ENCODE measurements at regions of chr6 and their contacts with region 1.

Region 1: GRCh38 chr6:24861934-24862333 is 63.2 kb upstream of the ARMH2 start:
- DNase-seq: no peak
- ATAC-seq: no peak
- H3K4me3 ChIP-seq: no peak overlapping the region
- H3K27ac ChIP-seq: no peak overlapping the region
- H3K4me1 ChIP-seq: peaks cover 8 to 10% of the 10 kb centered on the region in 2 donors
- H3K27me3 ChIP-seq: no peaks in the 10 kb centered on the region
- CTCF ChIP-seq: no peak
- POLR2A ChIP-seq: no peak

Region 2: GRCh38 chr6:25017932-25018567 is 156.1 kb after region 1 on chr6:
- in situ Hi-C with region 1: loop called in 2 of 4 experiments (anchors 10 kb)
- intact Hi-C with region 1: no loop called
- DNase-seq: peak; percentile 32 to 67
- ATAC-seq: peak in 1 of 2 donors; percentile 95
- H3K4me3 ChIP-seq: no peak overlapping the region
- H3K27ac ChIP-seq: no peak overlapping the region
- H3K4me1 ChIP-seq: no peaks in the 10 kb centered on the region
- H3K27me3 ChIP-seq: no peaks in the 10 kb centered on the region
- CTCF ChIP-seq: peak; percentile 49 to 71 (median 63)
- POLR2A ChIP-seq: no peak

Region 3: DNA sequence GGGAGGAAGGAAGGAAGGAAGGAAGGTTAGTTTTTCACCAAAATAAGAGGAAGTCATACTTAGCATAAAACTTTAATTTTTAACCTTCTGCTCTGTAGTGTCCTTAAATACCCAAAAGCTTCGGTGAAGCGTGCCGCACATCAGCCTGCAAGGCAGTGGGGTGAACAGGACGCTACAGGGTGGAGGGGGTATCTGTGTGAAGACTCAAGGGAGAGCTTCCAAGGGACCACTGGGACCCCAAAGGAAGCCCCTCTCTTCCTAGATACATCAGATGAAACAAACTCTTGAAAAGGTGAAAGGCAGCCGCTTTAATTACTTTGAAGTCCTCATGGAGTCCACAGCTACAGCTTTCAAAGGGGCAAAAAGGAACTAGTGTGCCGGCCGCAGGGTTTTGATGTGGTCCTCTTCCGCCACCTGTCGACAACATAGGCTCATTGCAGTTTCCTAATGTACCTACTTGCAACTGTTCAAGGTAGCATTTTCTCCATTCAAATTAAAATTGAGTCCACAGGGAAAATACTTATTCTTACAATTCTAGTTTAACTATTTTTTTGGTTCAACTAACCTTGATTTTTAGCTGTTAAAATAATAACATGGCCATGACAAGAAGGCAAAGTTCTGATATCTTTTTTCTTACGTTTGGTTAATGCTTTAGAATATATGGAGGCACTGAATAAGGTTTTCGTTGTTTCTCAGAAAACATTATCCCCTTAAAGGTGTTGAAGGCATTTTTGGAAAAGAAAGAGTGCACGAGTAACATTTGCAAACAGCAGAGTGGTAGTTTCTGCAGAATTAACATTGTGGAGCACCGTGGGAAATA is 208.8 kb after region 1 on chr6:
- in situ Hi-C with region 1: loop called (anchors 5 to 10 kb)
- intact Hi-C with region 1: no loop called
- DNase-seq: peak; percentile 42 to 54
- ATAC-seq: peak; percentile 80 to 86
- H3K4me3 ChIP-seq: peak overlapping the region in 1 of 4 donors; percentile 25
- H3K27ac ChIP-seq: no peak overlapping the region
- H3K4me1 ChIP-seq: no peaks in the 10 kb centered on the region
- H3K27me3 ChIP-seq: no peaks in the 10 kb centered on the region
- CTCF ChIP-seq: peak; percentile 62 to 92 (median 77)
- POLR2A ChIP-seq: no peak

Measured in gastrocnemius medialis (tissue), 4 donors.